HepG2 (cell line): ENCODE measurements at regions of chr16 and their contacts with region 1.

Region 1: DNA sequence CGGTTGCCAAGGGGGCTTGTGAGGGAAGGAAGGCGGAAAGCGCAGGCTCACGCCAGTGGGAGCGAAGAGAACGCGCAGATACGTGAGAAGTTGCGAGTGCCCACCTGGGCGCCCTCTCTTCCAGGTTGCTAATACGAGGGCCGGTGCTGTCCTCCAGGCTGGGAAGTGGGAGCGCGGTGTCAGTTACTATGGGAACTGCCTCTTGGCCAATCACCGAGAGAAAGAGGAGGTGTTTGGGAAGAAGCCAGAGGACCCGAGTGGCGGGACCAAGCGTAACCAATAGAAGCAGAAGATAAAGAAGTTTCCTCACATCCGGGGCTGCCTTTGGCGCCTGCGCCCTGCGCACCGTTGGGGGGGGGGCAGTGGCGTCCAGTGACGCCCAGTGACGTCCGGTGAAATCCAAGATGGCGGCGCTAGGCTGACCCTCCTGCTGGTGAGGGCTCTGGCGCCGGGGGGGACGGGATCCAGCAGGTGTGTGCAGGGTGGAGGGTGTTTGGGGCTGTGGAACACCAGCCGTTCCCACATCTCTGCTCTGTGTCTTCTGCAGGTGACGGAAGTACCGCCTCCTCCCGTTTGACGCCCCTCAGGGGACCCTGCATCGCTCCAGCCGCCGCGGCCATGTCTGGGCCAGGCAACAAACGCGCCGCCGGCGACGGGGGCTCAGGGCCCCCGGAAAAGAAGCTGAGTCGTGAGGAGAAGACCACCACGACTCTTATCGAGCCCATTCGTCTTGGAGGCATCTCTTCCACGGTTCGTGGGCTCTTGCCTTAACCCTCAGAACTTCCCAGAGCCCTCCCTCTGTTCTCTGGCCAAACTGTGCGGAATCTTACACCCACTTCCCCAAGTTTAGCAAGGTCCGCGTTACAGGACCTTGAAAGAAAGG is at the starts of genes CFAP119 and RNF40:
- DNase-seq: peak; percentile 99
- ATAC-seq: peak; percentile 93
- H3K4me3 ChIP-seq: peak within 1 kb of the TSS; percentile 80 to 91 (median 86)
- H3K27ac ChIP-seq: peak within 1 kb of the TSS; percentile 66
- H3K4me1 ChIP-seq: peaks cover 29% of the 10 kb centered on the region
- H3K27me3 ChIP-seq: no peaks in the 10 kb centered on the region; a peak in 1 of 5 replicates
- CTCF ChIP-seq: no peak
- EP300 ChIP-seq: no peak; a peak in 1 of 4 replicates
- POLR2A ChIP-seq: peak; percentile 76 to 88
- RAD21 ChIP-seq: peak; percentile 24; the same call in 1 of the 2 replicates
- total RNA-seq, gene CFAP119: 1.2 and 6.4 TPM in 2 replicates
- total RNA-seq, gene RNF40: 85.6 and 102 TPM in 2 replicates

Region 2: DNA sequence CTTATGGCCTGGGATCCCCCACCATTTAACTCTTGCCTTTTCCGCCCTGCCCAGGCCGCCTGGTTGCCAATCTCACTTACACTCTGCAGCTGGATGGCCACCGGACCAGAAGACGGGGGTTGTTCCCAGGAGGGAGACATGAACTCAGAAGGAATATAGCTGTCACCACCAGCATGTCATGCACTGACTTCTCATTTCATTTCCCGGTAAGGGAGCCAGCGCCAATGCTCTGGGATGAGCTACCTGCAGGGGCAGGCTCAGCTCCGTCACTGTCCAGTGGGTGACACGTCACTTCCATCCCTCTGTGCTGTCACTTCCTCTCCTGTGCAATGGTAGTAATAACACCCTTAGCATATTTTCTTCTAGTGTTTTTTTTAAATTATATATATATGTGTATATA is 262.9 kb before region 1 on chr16:
- CTCF ChIA-PET with region 1: no interaction called
- POLR2A ChIA-PET with region 1: no interaction called
- in situ Hi-C with region 1: no loop called
- intact Hi-C with region 1: no loop called
- DNase-seq: no peak
- ATAC-seq: peak; percentile 67
- H3K4me3 ChIP-seq: peak overlapping the region in 1 of 3 experiments; percentile 34; a peak in 2 of 6 replicates
- H3K27ac ChIP-seq: no peak overlapping the region
- H3K4me1 ChIP-seq: no peaks in the 10 kb centered on the region
- H3K27me3 ChIP-seq: no peaks in the 10 kb centered on the region; a peak in 1 of 5 replicates
- CTCF ChIP-seq: no peak
- EP300 ChIP-seq: no peak
- POLR2A ChIP-seq: no peak
- RAD21 ChIP-seq: no peak

Region 3: DNA sequence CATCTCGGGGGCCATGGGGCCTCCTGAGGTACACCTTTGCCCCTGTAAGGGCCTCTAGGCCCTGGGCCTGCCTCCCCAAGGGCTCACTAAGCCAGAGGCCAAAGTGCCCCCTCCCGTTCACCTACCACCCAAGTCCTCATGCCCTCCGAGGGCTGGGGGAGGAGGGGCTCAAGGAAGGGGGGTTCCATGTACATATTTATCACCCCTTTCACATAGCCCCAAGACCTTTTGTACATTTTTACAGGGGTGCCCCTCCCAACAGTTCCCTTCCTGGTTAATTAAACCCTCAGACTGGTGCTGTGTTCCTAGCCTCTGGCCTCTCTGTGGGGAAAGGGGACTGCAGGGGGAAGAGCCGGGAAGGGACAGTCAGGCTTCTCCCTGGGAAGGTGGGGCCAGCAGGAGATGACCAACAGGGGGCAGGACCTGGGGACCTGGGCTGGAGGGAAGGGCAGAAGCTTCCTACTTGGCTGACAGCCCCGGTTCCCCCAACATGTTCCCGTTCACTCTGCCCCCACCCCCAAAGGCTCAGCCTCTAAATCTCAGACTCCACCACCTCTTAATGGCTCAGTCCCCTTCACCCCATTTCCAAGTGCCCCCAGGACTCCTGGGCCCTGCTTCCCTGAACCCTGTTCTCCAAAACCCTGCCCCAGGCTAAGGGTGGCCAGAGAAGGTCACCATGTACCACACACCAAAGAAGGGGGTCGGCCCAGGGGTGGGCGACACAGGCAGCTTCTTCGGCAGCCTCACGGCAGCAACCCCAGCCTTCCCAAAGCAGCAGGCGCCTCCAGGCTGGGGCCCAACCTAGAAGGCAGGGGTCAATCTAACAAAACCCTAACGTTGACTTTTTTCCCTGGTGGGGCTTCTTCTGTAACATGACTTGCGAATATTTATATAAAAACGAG is 92.0 kb before region 1 on chr16:
- CTCF ChIA-PET with region 1: no interaction called
- POLR2A ChIA-PET with region 1: no interaction called
- in situ Hi-C with region 1: no loop called
- intact Hi-C with region 1: no loop called
- DNase-seq: no peak
- ATAC-seq: peak; percentile 43
- H3K4me3 ChIP-seq: no peak overlapping the region
- H3K27ac ChIP-seq: no peak overlapping the region
- H3K4me1 ChIP-seq: no peaks in the 10 kb centered on the region
- H3K27me3 ChIP-seq: no peaks in the 10 kb centered on the region
- CTCF ChIP-seq: peak; percentile 45
- EP300 ChIP-seq: no peak
- POLR2A ChIP-seq: no peak
- RAD21 ChIP-seq: no peak

Region 4: DNA sequence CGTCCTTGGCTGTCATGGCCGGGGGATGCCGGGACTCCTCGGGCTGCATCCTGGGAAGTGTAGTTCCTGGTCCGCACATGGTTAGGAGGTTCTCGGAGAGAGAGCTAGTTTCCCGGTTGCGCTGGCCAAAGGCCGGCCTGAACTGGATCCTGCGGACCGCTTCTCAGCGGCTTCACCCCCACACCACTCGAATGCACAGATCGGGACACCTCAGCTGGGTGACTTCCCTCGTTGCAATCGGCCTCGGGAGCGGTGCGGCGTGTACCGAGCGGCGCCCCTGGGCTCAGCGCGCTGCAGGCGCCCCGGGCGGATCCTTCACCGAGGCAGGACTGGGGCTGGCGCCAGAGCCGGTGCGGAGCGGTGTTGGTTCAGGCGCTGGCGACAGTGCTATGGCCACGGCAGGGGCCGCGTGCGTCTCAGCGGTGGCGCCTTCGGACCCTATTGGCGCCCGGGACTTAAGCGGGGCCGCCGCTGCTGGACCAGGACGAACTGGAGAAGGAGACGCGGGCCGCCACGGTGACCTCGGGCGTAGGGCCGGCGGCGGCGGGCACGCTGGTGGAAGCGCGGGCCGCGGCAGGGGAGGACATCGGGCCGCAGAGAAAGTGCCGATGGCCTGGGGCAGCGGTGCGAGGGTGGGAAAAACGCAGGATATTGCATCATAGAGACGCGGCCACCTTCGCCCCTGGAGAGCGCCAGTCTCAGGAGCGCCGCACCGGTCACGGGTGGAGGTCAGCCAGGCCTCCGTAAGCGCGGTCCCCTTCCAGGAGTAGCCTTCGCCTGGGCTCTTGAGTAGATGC is 13.4 kb after region 1 on chr16:
- CTCF ChIA-PET with region 1: no interaction called
- POLR2A ChIA-PET with region 1: interaction called, 10 read pairs
- in situ Hi-C with region 1: no loop called
- intact Hi-C with region 1: no loop called
- DNase-seq: peak; percentile 83
- ATAC-seq: peak; percentile 84
- H3K4me3 ChIP-seq: peak overlapping the region; percentile 63 to 88 (median 75)
- H3K27ac ChIP-seq: peak overlapping the region; percentile 89
- H3K4me1 ChIP-seq: peaks cover 36% of the 10 kb centered on the region
- H3K27me3 ChIP-seq: no peaks in the 10 kb centered on the region; a peak in 1 of 5 replicates
- CTCF ChIP-seq: peak; percentile 34
- EP300 ChIP-seq: peak; percentile 6 to 39; a peak in 1 of 4 replicates
- POLR2A ChIP-seq: peak; percentile 83 to 86
- RAD21 ChIP-seq: peak; percentile 44